Activated CD8-positive, alpha-beta memory T cell treated with anti-CD3 and anti-CD28 coated beads, Interleukin-2, amount 10 ng/mL, durations not matched to agents 7 days and 5 days (primary cell): ENCODE measurements at regions of chr15 and their contacts with region 1.

Region 1: DNA sequence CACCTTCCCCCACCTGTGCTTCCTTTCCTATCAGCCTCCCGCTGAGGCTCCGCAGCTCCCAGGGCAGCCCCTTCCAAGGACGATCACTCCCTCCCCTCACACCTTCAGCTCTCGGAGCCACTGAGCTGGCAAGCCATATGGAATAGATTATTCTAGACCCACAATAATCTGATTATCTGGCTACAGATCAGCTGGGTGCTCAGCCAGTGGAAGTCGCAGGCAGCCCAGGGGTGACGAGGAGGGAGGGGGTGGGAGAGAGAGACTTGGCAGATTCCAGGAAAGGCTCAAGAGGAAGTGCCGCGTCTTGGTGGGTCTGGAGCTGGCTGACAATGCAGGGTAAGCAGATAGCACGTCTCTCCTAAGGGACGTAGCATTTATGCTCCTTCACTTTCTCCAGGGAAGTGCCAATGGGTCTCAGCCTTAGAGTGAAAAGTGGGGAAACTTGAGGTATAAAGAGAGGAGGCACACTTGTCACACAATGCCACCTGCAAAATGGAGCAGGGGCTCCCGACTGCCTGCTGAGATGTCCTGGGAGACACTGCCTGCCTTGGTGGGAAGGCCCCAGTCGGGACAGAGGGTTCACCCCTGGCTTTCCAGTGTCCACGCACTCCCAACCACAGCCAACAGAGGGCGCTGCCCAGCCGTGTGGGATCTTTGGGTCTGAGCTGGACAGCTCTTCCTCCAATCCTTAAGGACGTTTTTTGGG is 9.4 kb upstream of the MESP1 start:
- DNase-seq: peak; percentile 81
- ATAC-seq: peak; percentile 87
- H3K4me3 Mint-ChIP-seq: no peak overlapping the region
- H3K27ac Mint-ChIP-seq: no peak overlapping the region
- H3K4me1 Mint-ChIP-seq: peaks cover 6% of the 10 kb centered on the region
- H3K27me3 Mint-ChIP-seq: peaks cover 7% of the 10 kb centered on the region

Region 2: DNA sequence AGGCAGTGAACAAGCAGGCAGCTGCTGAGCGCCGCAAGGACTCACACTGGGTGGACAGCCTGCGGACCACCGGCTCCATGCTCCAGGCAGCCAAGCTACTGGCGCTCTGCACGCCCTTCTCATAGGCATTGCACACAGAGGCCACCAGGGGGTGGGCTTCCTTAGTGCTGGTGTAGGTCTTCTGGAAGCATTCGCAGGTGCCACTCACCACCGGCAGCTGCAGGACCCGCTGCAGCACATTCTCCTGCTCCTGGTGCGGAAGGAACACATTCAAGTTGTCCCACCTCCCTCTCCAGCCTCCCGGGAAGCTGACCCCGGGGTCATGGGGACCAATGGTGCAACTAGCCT is 87.3 kb before region 1 on chr15:
- CTCF ChIA-PET with region 1: no interaction called
- DNase-seq: no peak
- ATAC-seq: peak; percentile 47
- H3K4me3 Mint-ChIP-seq: no peak overlapping the region
- H3K27ac Mint-ChIP-seq: no peak overlapping the region
- H3K4me1 Mint-ChIP-seq: no peaks in the 10 kb centered on the region
- H3K27me3 Mint-ChIP-seq: no peaks in the 10 kb centered on the region

Region 3: DNA sequence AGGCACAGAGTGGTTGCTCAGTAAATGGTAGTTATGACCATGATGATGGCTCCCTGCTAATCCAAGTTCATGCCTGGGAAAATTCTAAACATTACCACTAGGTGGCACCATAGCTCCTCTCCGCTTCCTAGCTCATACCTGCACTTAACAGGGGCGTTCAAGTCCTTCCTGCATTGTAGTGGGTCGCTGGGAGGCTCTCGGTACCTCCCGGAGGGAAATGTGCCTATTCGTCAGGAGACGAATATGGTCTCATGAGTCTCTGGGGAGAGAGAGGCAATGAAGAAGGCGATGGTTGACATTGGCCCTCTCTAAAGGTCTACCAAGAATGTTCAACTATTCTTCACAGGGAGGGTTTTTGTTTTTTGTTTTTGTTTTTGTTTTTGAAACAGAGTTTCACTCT is 20.3 kb before region 1 on chr15:
- CTCF ChIA-PET with region 1: interaction called, 31 read pairs
- DNase-seq: peak; percentile 71
- ATAC-seq: peak; percentile 95
- H3K4me3 Mint-ChIP-seq: no peak overlapping the region
- H3K27ac Mint-ChIP-seq: no peak overlapping the region
- H3K4me1 Mint-ChIP-seq: peaks cover 3% of the 10 kb centered on the region
- H3K27me3 Mint-ChIP-seq: peaks cover 2% of the 10 kb centered on the region

Region 4: DNA sequence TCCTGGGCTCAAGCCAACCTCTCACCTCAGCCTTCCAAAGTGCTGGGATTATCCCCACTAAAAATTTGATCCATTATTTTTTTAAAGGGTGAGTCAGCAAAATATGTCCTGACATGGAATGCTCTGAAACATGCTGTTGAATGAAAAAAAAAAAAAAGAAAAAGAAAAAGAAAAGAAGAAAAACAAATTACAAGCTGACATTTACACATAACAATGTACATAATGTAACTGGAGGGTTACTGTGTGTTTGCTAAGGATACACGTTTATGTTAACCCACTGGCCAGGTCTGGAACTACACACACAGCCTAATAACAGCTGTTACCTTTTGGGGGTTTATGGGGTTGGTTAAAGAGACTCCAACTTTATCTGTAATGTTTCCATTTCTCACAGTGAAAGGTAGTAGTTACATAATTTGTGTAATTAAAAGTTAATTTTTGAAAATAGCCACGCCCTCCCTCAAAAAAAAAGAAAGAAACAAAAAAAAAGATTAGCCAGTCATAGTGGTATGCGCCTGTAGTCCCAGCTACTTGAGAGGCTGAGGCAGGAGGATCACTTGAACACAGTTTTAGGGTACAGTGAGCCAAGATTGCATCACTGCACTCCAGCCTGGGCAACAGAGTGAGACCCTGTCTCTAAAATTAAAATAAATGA is 12.6 kb after region 1 on chr15:
- CTCF ChIA-PET with region 1: interaction called, 13 read pairs
- DNase-seq: no peak
- ATAC-seq: no peak
- H3K4me3 Mint-ChIP-seq: no peak overlapping the region
- H3K27ac Mint-ChIP-seq: no peak overlapping the region
- H3K4me1 Mint-ChIP-seq: no peaks in the 10 kb centered on the region
- H3K27me3 Mint-ChIP-seq: peaks cover 14% of the 10 kb centered on the region

Region 5: DNA sequence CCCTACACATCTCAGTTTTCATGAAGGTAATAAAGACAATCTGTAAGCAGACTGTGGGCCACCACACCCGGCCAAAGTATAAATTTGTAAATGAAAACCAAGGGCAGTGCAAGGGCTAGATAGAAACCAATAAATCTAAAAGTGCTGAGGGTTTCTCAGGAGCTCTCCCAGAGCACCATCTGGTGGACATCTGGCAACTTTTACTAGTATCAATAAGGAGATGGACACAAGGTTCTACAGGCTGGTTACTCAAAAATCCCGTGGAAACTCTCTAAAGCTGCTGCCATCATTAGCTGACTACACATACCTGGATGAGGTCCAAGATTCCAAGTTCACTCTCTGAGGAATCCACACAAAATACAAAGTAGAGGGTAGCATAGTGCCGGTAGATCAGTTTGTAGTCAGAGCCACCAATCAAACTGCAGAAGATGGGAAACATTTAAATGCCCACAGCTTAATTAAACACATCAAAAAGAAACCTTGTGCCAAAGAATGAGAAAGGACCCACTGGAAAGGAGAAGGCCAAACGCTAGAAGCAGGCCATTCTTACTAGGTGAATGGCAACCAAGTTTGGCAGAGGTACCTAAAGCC is 127.9 kb after region 1 on chr15:
- CTCF ChIA-PET with region 1: interaction called, 18 read pairs
- DNase-seq: no peak
- ATAC-seq: no peak
- H3K4me3 Mint-ChIP-seq: no peak overlapping the region
- H3K27ac Mint-ChIP-seq: no peak overlapping the region
- H3K4me1 Mint-ChIP-seq: peaks cover 25% of the 10 kb centered on the region
- H3K27me3 Mint-ChIP-seq: no peaks in the 10 kb centered on the region

Region 6: GRCh38 chr15:90071208-90071807 is 310.9 kb after region 1 on chr15:
- CTCF ChIA-PET with region 1: interaction called, 12 read pairs
- DNase-seq: peak; percentile 86
- ATAC-seq: peak; percentile 87
- H3K4me3 Mint-ChIP-seq: no peak overlapping the region
- H3K27ac Mint-ChIP-seq: no peak overlapping the region
- H3K4me1 Mint-ChIP-seq: peaks cover 5% of the 10 kb centered on the region
- H3K27me3 Mint-ChIP-seq: no peaks in the 10 kb centered on the region